ENCODE measurements at regions of chr1 and their contacts with region 1.

Region 1: DNA sequence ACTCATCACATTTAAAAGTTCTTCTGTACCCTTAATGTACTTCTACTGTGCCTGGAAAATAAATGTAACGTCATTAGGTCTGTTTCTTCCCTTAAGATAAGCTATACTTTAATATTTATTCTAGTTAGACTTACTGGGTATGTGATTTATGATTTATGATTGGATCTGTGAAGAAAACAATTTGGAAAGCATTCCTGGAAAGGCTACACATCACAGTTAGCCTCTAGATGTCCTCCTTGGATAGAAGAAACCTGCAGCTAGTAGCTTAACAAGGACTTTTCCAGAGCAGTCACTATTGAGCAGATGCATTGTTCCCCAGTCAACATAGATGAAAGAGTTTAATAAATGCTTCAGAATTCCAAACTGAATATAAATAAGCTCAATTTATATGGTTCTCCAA is 22.2 kb upstream of the ABL2 start:
- DNase-seq: peak in 1 of 2 experiments; percentile 59
- ATAC-seq: peak; percentile 90 to 93
- H3K4me3 ChIP-seq: no peak overlapping the region
- H3K27ac ChIP-seq: no peak overlapping the region
- H3K4me1 ChIP-seq: no peaks in the 10 kb centered on the region
- CTCF ChIP-seq: peak; percentile 72
- EP300 ChIP-seq: no peak
- POLR2A ChIP-seq: no peak
- RAD21 ChIP-seq: peak; percentile 82

Region 2: DNA sequence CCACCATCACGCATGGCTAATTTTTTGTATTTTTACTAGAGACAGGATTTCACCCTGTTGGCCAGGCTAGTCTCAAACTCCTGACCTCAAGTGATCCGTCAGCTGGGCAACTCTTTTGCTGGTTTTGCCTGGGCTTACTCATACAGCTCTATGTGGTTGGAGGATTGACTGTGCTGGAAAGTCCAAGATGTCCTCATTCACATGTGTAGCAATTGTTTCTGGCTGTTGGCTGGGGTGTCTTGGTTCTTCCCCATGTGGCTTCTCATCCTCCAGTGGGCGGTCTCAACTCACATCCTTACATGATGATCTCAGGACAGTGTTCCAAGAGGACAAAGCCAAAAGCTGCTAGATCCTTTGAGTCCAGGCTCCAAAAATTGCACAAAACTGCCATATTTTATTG is 685.5 kb before region 1 on chr1:
- CTCF ChIA-PET with region 1: no interaction called
- POLR2A ChIA-PET with region 1: no interaction called
- DNase-seq: no peak
- ATAC-seq: no peak
- H3K4me3 ChIP-seq: no peak overlapping the region
- H3K27ac ChIP-seq: no peak overlapping the region
- H3K4me1 ChIP-seq: no peaks in the 10 kb centered on the region
- CTCF ChIP-seq: no peak
- EP300 ChIP-seq: no peak
- POLR2A ChIP-seq: no peak
- RAD21 ChIP-seq: no peak

Region 3: GRCh38 chr1:178693366-178693765 is 558.3 kb before region 1 on chr1:
- CTCF ChIA-PET with region 1: no interaction called
- POLR2A ChIA-PET with region 1: no interaction called
- DNase-seq: peak in 1 of 2 experiments; percentile 17
- ATAC-seq: peak in 1 of 2 experiments; percentile 63; a peak in 3 of 6 replicates
- H3K4me3 ChIP-seq: no peak overlapping the region
- H3K27ac ChIP-seq: no peak overlapping the region
- H3K4me1 ChIP-seq: no peaks in the 10 kb centered on the region
- CTCF ChIP-seq: no peak
- EP300 ChIP-seq: no peak
- POLR2A ChIP-seq: no peak
- RAD21 ChIP-seq: no peak

Region 4: DNA sequence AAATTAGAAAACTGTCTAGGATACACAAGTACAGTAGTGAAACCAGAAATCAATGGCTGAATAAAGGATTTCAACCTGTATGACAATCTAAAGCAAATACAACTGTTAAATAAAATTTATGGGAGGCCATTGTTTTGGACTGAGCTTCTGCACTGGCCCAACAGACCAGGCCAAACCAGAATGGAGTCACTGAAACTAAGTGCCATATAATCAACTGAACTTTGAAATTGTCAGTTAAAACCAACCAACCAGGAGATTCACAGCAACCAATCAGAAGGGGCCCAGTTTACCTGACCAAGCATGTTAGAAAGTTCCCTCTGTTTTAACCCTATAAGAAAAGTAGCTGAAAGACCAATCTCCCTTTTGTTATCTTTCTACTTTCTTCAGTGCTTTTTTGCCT is 11.4 kb after region 1 on chr1:
- CTCF ChIA-PET with region 1: interaction called, 12 read pairs
- POLR2A ChIA-PET with region 1: no interaction called
- DNase-seq: no peak
- ATAC-seq: no peak
- H3K4me3 ChIP-seq: no peak overlapping the region
- H3K27ac ChIP-seq: no peak overlapping the region
- H3K4me1 ChIP-seq: peaks cover 4% of the 10 kb centered on the region; the same call in 1 of the 3 replicates
- CTCF ChIP-seq: no peak
- EP300 ChIP-seq: no peak
- POLR2A ChIP-seq: no peak
- RAD21 ChIP-seq: no peak

Region 5: GRCh38 chr1:179293340-179294327 is 42.0 kb after region 1 on chr1 and contains the start of gene SOAT1:
- CTCF ChIA-PET with region 1: interaction called, 25 read pairs
- POLR2A ChIA-PET with region 1: no interaction called
- DNase-seq: peak; percentile 94
- ATAC-seq: peak; percentile 96
- H3K4me3 ChIP-seq: peak within 1 kb of the TSS; percentile 76
- H3K27ac ChIP-seq: peak within 1 kb of the TSS; percentile 85 to 92
- H3K4me1 ChIP-seq: peaks cover 28% of the 10 kb centered on the region
- CTCF ChIP-seq: no peak
- EP300 ChIP-seq: no peak
- POLR2A ChIP-seq: peak; percentile 88
- RAD21 ChIP-seq: no peak
- polyA plus RNA-seq, gene SOAT1: 50.3 and 62.1 TPM in 2 replicates

Region 6: DNA sequence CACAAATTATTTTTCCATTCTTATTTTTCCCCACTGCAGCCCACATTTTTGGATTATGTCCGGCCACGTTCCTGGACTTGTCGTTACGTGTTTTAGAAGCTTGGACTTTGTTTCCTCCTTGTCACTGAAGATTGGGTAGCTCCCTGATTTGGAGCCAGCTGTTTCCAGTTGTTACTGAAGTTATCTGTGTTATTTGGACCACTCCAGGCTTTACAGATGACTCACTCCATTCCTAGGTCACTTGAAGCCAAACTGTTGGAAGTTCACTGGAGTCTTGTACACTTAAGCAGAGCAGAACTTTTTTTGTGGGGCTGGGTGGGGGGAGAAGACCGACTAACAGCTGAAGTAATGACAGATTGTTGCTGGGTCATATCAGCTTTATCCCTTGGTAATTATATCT is 101.9 kb after region 1 on chr1:
- CTCF ChIA-PET with region 1: interaction called, 13 read pairs
- POLR2A ChIA-PET with region 1: no interaction called
- DNase-seq: no peak
- ATAC-seq: 0 out of 6 replicates have a peak, but pooled peaks of 1 of the 2 experiments have one; percentile 30
- H3K4me3 ChIP-seq: no peak overlapping the region
- H3K27ac ChIP-seq: no peak overlapping the region
- H3K4me1 ChIP-seq: peaks cover 7% of the 10 kb centered on the region; the same call in 2 of the 3 replicates
- CTCF ChIP-seq: no peak
- EP300 ChIP-seq: no peak
- POLR2A ChIP-seq: no peak
- RAD21 ChIP-seq: no peak

Region 7: GRCh38 chr1:179365320-179366092 is 113.8 kb after region 1 on chr1 and contains the start of gene AXDND1:
- CTCF ChIA-PET with region 1: interaction called, 44 read pairs
- POLR2A ChIA-PET with region 1: no interaction called
- DNase-seq: peak; percentile 73 to 87
- ATAC-seq: peak; percentile 94 to 98
- H3K4me3 ChIP-seq: peak within 1 kb of the TSS; percentile 72
- H3K27ac ChIP-seq: peak within 1 kb of the TSS; percentile 87 to 94
- H3K4me1 ChIP-seq: 0 out of 3 replicates have a peak, but pooled peaks cover 4% of the 10 kb centered on the region
- CTCF ChIP-seq: no peak
- EP300 ChIP-seq: no peak
- POLR2A ChIP-seq: peak; percentile 34; the same call in 1 of the 2 replicates
- RAD21 ChIP-seq: no peak
- polyA plus RNA-seq, gene AXDND1: 0.56 and 0.71 TPM in 2 replicates

Measured in A549 (cell line).